Heart right ventricle (tissue), 16 donors: ENCODE measurements at regions of chr15 and their contacts with region 1.

Region 1: GRCh38 chr15:43275740-43276562 is 9.2 kb upstream of the TGM5 start:
- DNase-seq: no peak
- ATAC-seq: no peak
- H3K4me3 ChIP-seq: no peak overlapping the region
- H3K27ac ChIP-seq: no peak overlapping the region
- H3K4me1 ChIP-seq: peaks cover 0 to 7% (median 0%) of the 10 kb centered on the region in 9 donors
- H3K27me3 ChIP-seq: peaks cover 0 to 18% (median 5%) of the 10 kb centered on the region in 7 donors
- CTCF ChIP-seq: no peak

Region 2: DNA sequence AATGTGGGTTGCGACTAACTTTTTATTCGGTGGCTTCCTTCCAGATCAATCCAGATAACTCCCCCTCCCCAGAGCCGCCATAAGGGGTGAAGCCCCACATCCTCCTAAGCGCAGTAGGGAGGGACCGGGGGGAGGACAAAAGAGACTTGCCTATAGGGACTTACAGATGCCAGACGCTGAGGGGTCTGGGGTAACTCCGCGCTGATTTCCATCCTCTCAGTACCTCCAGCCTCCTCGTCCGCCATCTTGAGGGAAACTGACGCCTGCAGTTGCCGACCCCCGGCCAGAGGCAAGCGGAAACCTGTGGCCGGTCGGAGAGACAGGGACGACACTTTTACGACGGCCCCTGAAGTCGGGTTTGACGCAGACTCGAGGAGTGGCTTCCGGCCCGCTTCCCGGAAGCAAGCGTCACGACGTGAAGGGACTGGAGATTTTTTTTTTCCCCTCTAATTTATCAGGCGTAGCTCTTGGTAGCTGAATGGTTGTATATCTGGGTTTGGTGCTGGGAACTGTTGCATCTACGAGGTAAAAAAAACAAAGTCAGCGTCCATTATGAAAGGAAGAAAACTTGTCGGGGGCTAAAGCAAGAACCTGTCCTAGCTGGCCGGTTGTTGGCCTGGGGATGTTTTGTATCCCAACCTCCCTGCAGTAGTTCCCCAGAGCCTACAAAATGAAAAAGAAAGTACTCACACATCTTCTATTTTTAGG is 170.0 kb before region 1 on chr15 and contains the start of gene UBR1:
- intact Hi-C with region 1: no loop called
- DNase-seq: peak; percentile 89 to 95
- ATAC-seq: peak; percentile 95 to 99 (median 98)
- H3K4me3 ChIP-seq: peak within 1 kb of the TSS; percentile 60 to 92 (median 78)
- H3K27ac ChIP-seq: peak within 1 kb of the TSS; percentile 52 to 98 (median 94)
- H3K4me1 ChIP-seq: peaks cover 3 to 44% (median 32%) of the 10 kb centered on the region in 9 donors
- H3K27me3 ChIP-seq: no peaks in the 10 kb centered on the region
- CTCF ChIP-seq: no peak
- total RNA-seq, gene UBR1: 19.2 to 46.2 (median 28.1) TPM

Region 3: DNA sequence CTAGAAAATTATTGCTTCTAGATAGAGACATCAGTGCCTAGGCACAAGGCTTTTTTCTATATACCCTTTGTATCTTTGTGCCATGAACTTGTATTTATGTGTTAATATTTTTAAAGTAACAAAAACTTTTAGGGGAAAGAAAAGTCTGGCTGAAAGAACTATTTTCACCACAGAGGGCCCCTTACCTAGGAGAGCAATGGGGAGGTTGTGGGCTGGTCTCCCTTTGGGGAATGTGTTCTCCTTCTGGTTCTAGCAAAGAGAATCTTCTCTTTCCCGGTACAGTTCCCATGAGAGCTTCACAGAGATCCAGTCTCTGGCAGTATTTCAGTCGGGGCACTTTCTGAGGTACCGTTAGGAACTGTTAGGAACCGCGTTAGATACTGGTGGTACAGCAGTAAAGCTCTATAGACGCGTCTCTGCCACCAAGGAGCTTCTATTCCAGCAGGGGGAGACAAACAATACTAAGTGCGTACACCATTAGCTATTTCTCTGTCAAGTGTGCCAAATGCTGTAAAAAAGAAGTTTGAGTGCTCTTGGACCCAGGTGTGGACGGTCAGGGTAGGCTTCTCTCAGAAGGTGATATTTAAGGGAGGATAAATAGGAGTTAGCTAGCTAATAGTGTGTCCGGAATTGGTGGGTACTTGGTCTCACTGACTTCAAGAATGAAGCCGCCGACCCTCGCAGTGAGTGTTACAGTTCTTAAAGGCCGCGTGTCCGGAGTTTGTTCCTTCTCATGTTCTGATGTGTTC is 50.6 kb before region 1 on chr15:
- intact Hi-C with region 1: loop called in 3 of 10 experiments (anchors 5 kb)
- DNase-seq: peak in 1 of 2 donors; percentile 35
- ATAC-seq: peak; percentile 63 to 83 (median 78)
- H3K4me3 ChIP-seq: no peak overlapping the region
- H3K27ac ChIP-seq: no peak overlapping the region
- H3K4me1 ChIP-seq: peaks cover 0 to 7% (median 0%) of the 10 kb centered on the region in 9 donors
- H3K27me3 ChIP-seq: peaks cover 0 to 3% (median 0%) of the 10 kb centered on the region in 7 donors
- CTCF ChIP-seq: peak; percentile 40 to 80 (median 74)

Region 4: GRCh38 chr15:43239732-43240491 is 36.0 kb before region 1 on chr15:
- intact Hi-C with region 1: no loop called
- DNase-seq: no peak
- ATAC-seq: no peak
- H3K4me3 ChIP-seq: no peak overlapping the region
- H3K27ac ChIP-seq: no peak overlapping the region
- H3K4me1 ChIP-seq: no peaks in the 10 kb centered on the region
- H3K27me3 ChIP-seq: peaks cover 0 to 5% (median 0%) of the 10 kb centered on the region in 7 donors
- CTCF ChIP-seq: no peak